K562 (cell line): ENCODE measurements at regions of chr7 and their contacts with region 1.

Region 1: GRCh38 chr7:43260980-43261878 is 148.8 kb downstream of the HECW1 start:
- DNase-seq: peak; percentile 56 to 83 (median 62)
- ATAC-seq: peak; percentile 97
- H3K4me3 ChIP-seq: no peak overlapping the region
- H3K27ac ChIP-seq: no peak overlapping the region
- H3K4me1 ChIP-seq: no peaks in the 10 kb centered on the region
- H3K27me3 ChIP-seq: peaks cover 10 to 19% of the 10 kb centered on the region in 2 experiments; a peak in 4 of 5 replicates
- CTCF ChIP-seq: peak; percentile 82 to 88 (median 86)
- EP300 ChIP-seq: no peak
- POLR2A ChIP-seq: no peak
- RAD21 ChIP-seq: peak; percentile 76 to 85

Region 2: GRCh38 chr7:42931834-42932651 is 329.2 kb before region 1 on chr7 and contains the starts of genes MRPL32 and PSMA2:
- CTCF ChIA-PET with region 1: no interaction called
- POLR2A ChIA-PET with region 1: interaction called, 3 read pairs
- in situ Hi-C with region 1: loop called (anchors 25 kb)
- intact Hi-C with region 1: no loop called
- DNase-seq: peak; percentile 94 to 98 (median 96)
- ATAC-seq: peak; percentile 100
- H3K4me3 ChIP-seq: peak within 1 kb of the TSS; percentile 85
- H3K27ac ChIP-seq: peak within 1 kb of the TSS; percentile 89
- H3K4me1 ChIP-seq: peaks cover 0 to 15% of the 10 kb centered on the region in 2 experiments; a peak in 4 of 5 replicates
- H3K27me3 ChIP-seq: no peaks in the 10 kb centered on the region
- CTCF ChIP-seq: no peak
- EP300 ChIP-seq: no peak
- POLR2A ChIP-seq: peak; percentile 93
- RAD21 ChIP-seq: no peak
- polyA plus RNA-seq, gene MRPL32: 341 to 351 TPM
- polyA plus RNA-seq, gene PSMA2: 887 to 1,070 TPM

Region 3: DNA sequence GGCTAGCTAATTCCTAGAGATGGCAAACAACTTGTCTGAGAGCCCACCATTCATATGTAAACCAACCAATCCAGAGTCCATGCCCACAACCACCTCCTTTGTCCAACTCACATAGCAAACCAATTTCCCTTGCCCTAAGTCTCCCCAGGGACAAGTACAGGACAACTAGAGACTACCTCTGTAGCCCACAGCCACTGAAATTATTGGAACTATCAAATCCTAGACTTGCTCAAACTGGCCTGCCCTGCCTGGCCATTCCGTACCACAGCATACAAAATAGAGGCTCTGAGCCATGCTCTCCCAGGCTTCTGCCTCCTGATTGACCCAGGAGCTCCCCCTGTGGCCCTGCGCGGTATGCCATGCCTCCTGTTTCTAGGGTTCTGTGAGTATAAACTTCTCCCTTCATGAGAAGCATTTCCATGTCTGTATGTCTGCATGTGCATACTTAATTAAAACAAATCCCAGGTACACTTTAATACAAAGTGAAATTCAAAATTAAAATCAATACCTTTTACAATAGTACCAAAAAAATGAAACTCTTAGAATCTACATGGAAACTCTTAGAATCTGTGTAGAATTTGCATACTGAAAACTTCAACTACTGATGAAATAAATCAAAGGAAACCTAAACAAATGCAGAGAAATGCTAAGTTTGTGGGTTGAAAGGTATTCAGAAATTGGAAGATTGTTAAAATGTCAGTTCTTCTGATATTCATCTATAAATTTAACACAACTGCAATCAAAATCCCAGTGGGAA is 152.8 kb before region 1 on chr7:
- CTCF ChIA-PET with region 1: no interaction called
- POLR2A ChIA-PET with region 1: no interaction called
- in situ Hi-C with region 1: no loop called
- intact Hi-C with region 1: loop called (anchors 10 kb)
- DNase-seq: peak; percentile 65 to 81 (median 72)
- ATAC-seq: peak; percentile 94
- H3K4me3 ChIP-seq: no peak overlapping the region
- H3K27ac ChIP-seq: no peak overlapping the region
- H3K4me1 ChIP-seq: peaks cover 11 to 17% of the 10 kb centered on the region in 2 experiments; a peak in 4 of 5 replicates
- H3K27me3 ChIP-seq: peaks cover 0 to 4% of the 10 kb centered on the region in 2 experiments; a peak in 2 of 5 replicates
- CTCF ChIP-seq: peak; percentile 88 to 93 (median 88)
- EP300 ChIP-seq: no peak
- POLR2A ChIP-seq: no peak
- RAD21 ChIP-seq: peak; percentile 37 to 75

Region 4: GRCh38 chr7:43439631-43440401 is 178.6 kb after region 1 on chr7:
- CTCF ChIA-PET with region 1: no interaction called
- POLR2A ChIA-PET with region 1: no interaction called
- in situ Hi-C with region 1: no loop called
- intact Hi-C with region 1: loop called (anchors 10 kb)
- DNase-seq: peak; percentile 70 to 82 (median 80)
- ATAC-seq: peak; percentile 98
- H3K4me3 ChIP-seq: no peak overlapping the region
- H3K27ac ChIP-seq: no peak overlapping the region
- H3K4me1 ChIP-seq: peaks cover 0 to 8% of the 10 kb centered on the region in 2 experiments; a peak in 1 of 5 replicates
- H3K27me3 ChIP-seq: peaks cover 19 to 20% of the 10 kb centered on the region in 2 experiments
- CTCF ChIP-seq: peak; percentile 89 to 94 (median 90)
- EP300 ChIP-seq: no peak
- POLR2A ChIP-seq: no peak
- RAD21 ChIP-seq: peak; percentile 51 to 81